ENCODE measurements at regions of chr2 and their contacts with region 1.

Region 1: DNA sequence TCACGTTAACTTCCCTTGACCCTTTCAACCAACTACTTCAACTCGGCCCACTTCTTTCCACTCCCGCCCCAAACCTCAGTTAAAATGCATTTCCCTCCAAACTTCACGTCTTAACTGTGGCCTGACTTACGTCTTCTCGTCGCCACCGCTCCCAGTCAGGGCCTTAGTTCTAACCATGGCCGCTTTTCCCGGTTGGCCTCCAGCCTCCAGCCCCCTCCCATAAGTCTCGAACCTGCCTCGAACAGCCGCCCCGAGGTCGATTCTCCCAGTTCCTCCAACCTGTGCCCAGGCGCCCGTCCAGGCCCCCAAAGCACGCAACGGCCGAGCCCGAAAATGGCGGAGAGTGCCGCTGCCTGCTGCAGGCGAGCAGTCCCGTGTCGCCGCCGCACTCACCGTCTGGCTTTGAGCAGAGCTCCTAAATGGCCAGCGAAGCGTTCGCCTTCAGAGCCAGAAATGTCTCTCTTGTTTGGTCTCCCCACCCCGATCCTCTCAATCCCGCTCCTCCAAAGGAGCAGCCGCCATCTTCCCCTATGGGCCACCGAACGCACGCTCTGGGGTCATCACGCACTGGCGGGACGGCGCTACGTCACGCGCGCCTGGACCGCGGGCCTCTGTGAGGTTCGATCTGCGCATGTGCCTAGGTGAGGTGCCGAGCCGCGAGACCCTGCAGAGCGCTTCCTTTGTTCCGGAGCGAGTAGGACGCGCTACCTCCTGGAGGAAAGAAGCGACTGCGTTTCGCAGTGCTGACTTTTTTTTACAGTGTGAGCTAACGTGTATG is at the start of gene WDR33:
- DNase-seq: peak; percentile 95
- H3K4me3 Mint-ChIP-seq: peak within 1 kb of the TSS; percentile 100
- H3K27ac Mint-ChIP-seq: peak within 1 kb of the TSS; percentile 96
- H3K4me1 Mint-ChIP-seq: peaks cover 49% of the 10 kb centered on the region
- H3K27me3 Mint-ChIP-seq: peaks cover 4% of the 10 kb centered on the region
- total RNA-seq, gene WDR33: 63.7 to 65.1 TPM

Region 2: DNA sequence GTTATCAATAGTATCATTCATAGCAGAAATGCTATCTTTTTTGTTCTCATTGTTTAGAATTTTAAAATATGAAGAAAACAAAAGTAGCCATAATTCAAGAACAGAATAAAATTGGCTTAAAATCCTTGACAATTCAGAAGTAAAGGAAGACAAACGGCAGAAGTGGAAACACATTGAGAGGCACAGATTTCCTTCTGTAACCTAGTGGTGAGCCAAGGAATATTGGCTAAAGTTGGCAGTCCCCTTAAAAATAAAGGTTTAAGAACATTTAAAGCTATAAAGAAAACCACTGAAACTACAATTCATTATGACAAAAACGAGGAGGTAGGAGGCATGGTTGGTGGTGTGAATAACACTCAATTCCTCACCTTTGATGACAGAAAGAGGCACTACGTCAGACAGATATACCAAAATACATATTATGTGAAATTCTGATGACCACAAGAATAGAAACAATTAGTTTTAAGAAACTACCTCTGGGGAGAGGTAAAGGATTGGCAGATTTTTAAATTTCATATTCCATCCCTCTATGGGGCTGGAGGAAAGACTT is 67.3 kb before region 1 on chr2:
- CTCF ChIA-PET with region 1: no interaction called
- POLR2A ChIA-PET with region 1: no interaction called
- DNase-seq: no peak
- H3K4me3 Mint-ChIP-seq: no peak overlapping the region
- H3K27ac Mint-ChIP-seq: no peak overlapping the region
- H3K4me1 Mint-ChIP-seq: peaks cover 27% of the 10 kb centered on the region
- H3K27me3 Mint-ChIP-seq: no peaks in the 10 kb centered on the region

Region 3: GRCh38 chr2:127829845-127830246 is 19.0 kb after region 1 on chr2:
- CTCF ChIA-PET with region 1: interaction called, 7 read pairs
- POLR2A ChIA-PET with region 1: interaction called, 16 read pairs
- DNase-seq: peak; percentile 73
- H3K4me3 Mint-ChIP-seq: no peak overlapping the region
- H3K27ac Mint-ChIP-seq: no peak overlapping the region
- H3K4me1 Mint-ChIP-seq: peaks cover 30% of the 10 kb centered on the region
- H3K27me3 Mint-ChIP-seq: peaks cover 1% of the 10 kb centered on the region

Region 4: GRCh38 chr2:127857265-127857808 is 46.5 kb after region 1 on chr2:
- CTCF ChIA-PET with region 1: no interaction called
- POLR2A ChIA-PET with region 1: interaction called, 22 read pairs
- DNase-seq: peak; percentile 24
- H3K4me3 Mint-ChIP-seq: peak overlapping the region; percentile 90
- H3K27ac Mint-ChIP-seq: peak overlapping the region; percentile 73
- H3K4me1 Mint-ChIP-seq: peaks cover 50% of the 10 kb centered on the region
- H3K27me3 Mint-ChIP-seq: no peaks in the 10 kb centered on the region

Measured in activated CD4-positive, alpha-beta memory T cell treated with anti-CD3 and anti-CD28 coated beads, Interleukin-2, amount 10 ng/mL, durations not matched to agents 7 days and 5 days (primary cell).